HAP-1 (cell line): ENCODE measurements at regions of chr3 and their contacts with region 1.

Region 1: GRCh38 chr3:45037734-45038455 is 11.8 kb downstream of the CLEC3B start:
- DNase-seq: peak; percentile 91 to 95
- H3K4me3 ChIP-seq: no peak overlapping the region
- H3K4me1 ChIP-seq: no peaks in the 10 kb centered on the region
- H3K27me3 ChIP-seq: no peaks in the 10 kb centered on the region

Region 2: DNA sequence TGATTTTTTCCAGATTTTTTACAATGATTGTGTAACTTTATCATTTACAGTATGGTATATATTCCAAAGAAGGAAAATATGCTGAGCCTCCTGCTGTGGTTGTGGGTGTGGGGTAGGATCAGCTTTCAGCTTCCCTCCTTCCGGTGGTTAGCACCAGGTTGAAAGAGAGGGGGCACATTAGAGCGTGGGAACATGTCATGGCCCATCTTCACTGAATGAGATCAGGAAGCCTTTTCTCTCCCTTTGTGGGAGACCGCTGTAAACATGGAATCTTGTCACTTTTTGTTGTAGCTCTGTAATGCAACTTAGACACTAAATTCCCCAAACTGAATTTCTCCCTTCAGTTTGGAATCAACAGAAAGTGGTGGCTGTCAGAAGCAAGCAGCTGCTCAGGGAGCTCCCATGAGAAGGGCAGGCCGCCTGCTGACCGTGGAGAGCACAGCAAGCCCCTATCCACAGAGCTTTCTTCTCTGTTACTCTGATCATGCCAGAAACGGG is 470.0 kb after region 1 on chr3:
- in situ Hi-C with region 1: loop called (anchors 5 kb)
- DNase-seq: peak; percentile 51 to 63
- H3K4me3 ChIP-seq: no peak overlapping the region
- H3K4me1 ChIP-seq: peaks cover 32% of the 10 kb centered on the region
- H3K27me3 ChIP-seq: no peaks in the 10 kb centered on the region

Region 3: DNA sequence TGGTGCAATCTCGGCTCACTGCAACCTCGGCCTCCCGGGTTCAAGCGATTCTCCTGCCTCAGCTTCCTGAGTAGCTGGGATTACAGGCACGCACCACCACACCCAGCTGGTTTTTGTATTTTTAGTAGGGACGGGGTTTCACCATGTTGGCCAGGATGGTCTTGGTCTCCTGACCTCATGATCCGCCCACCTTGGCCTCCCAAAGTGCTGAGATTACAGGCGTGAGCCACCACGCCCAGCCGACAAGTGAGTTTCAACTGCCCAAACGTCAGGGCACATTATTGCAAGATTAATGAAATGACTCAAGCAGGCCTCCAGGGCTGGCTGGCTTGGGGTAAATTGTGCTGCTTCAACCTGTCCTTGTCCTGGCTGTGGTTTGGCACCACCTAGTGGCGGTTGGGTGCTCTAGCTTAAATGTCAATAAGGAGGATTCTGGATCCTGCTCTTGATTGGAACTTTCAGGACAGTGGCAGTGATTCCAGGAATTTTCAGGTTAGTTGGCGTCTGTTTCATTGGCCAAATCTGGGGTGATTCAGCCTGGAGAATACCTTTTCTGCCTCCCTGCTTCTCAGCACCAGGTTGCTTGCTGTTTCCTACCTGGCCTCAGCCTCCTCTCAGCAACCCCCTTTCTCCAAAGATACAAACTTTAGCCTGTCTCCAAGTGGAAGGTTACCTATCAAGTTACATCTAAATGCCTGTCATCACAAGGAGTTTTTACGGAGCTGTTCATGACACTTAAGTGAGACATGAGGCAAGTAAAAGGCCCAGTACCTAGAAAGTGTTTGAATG is 618.9 kb after region 1 on chr3:
- in situ Hi-C with region 1: loop called (anchors 5 kb)
- DNase-seq: peak; percentile 84 to 91
- H3K4me3 ChIP-seq: no peak overlapping the region
- H3K4me1 ChIP-seq: peaks cover 4% of the 10 kb centered on the region
- H3K27me3 ChIP-seq: no peaks in the 10 kb centered on the region

Region 4: GRCh38 chr3:45929042-45929679 is 891.3 kb after region 1 on chr3:
- in situ Hi-C with region 1: loop called (anchors 10 kb)
- DNase-seq: peak in 1 of 2 experiments; percentile 59
- H3K4me3 ChIP-seq: no peak overlapping the region
- H3K4me1 ChIP-seq: no peaks in the 10 kb centered on the region
- H3K27me3 ChIP-seq: no peaks in the 10 kb centered on the region

Region 5: GRCh38 chr3:46078712-46079400 is 1041.0 kb after region 1 on chr3:
- in situ Hi-C with region 1: loop called (anchors 25 kb)
- DNase-seq: peak; percentile 89 to 93
- H3K4me3 ChIP-seq: no peak overlapping the region
- H3K4me1 ChIP-seq: no peaks in the 10 kb centered on the region
- H3K27me3 ChIP-seq: 0 out of 2 replicates have a peak, but pooled peaks cover 3% of the 10 kb centered on the region